ENCODE measurements at regions of chr3 and their contacts with region 1.

Region 1: DNA sequence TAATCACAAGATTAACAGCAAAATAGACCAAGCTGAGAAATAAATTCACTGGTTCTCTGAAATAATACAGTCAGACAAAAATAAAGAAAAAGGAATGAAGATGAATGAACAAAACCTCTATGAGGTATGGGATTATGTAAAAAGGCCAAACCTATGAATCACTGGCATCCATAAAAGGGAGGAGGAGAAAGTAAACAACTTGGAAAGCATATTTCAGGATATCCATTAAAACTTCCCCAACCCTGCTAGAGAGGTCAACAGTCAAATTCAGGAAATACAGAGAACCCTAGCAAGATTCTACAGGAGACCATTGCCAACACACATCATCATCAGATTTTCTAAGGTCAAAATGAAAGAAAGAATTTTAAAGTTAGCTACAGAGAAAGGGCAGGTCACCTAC is 649.7 kb upstream of the CBLB start:
- DNase-seq: no peak

Region 2: DNA sequence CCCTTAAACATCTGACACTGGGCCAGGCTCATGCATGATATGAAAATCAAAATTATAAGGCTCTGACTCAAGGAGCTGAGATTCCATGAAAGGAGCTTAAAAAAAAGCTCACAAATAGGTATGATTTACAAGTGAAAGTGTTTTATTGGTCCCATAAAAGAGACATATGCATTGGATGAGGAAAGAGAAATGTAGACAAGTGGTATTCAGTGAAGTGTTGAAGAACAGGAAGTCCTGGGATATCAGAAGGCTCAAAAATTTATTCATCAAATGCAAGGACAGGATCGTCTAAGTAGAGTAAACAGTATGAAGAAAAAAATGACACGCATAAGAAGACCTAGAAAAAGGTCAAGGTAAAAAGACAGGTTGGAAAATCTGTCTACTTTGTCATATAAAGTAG is 838.6 kb before region 1 on chr3:
- intact Hi-C with region 1: loop called in 1 of 2 experiments (anchors 5 kb)
- DNase-seq: no peak

Region 3: DNA sequence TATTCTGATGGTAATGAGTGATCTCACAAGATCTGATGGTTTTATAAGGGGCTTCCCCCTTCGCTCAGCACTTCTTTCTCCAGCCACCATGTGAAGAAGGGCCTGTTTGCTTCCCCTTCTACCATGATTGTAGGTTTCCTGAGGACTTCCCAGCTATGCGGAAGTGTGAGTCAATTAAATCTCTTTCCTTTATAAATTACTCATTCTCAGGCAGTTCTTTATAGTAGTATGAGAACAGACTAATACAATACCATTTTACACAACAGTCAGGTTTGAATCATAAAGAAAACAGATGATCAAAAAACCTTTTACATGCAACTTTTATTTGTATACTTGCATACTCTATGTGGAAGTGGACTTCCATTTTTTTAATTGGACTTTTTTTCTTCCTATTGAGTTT is 603.0 kb before region 1 on chr3:
- intact Hi-C with region 1: loop called in 1 of 2 experiments (anchors 2 kb)
- DNase-seq: no peak